ENCODE measurements at regions of chr18 and their contacts with region 1.

Region 1: DNA sequence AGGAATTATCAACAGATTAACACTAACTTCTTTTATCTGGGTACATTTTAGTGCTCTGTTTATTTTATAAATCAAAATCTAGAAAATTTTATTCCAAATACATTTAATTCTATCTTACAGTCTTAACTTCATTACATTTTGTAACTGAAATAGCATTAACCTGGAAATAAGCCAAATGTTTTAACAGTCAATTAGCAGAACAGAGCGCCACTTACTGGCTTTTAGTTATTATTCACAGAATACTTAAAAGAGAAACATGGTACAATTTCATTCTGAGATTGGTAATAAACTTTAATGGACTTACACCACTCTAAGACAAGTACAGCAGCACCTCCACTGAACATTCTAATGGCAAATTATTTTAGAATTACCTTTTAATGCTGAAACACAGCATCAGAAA is 38.6 kb downstream of the SS18 start:
- DNase-seq: peak; percentile 34
- H3K4me3 ChIP-seq: no peak overlapping the region
- H3K27ac ChIP-seq: no peak overlapping the region
- H3K4me1 ChIP-seq: no peaks in the 10 kb centered on the region
- H3K27me3 ChIP-seq: no peaks in the 10 kb centered on the region
- CTCF ChIP-seq: no peak
- POLR2A ChIP-seq: no peak

Region 2: GRCh38 chr18:26040051-26040656 is 11.7 kb before region 1 on chr18:
- CTCF ChIA-PET with region 1: interaction called, 10 read pairs
- POLR2A ChIA-PET with region 1: no interaction called
- dilution Hi-C with region 1: no loop called
- intact Hi-C with region 1: no loop called
- DNase-seq: peak; percentile 56
- H3K4me3 ChIP-seq: no peak overlapping the region
- H3K27ac ChIP-seq: no peak overlapping the region
- H3K4me1 ChIP-seq: peaks cover 3% of the 10 kb centered on the region
- H3K27me3 ChIP-seq: no peaks in the 10 kb centered on the region
- CTCF ChIP-seq: no peak
- POLR2A ChIP-seq: no peak

Measured in endothelial cell of umbilical vein (primary cell).